ENCODE measurements at regions of chr11 and their contacts with region 1.

Region 1: DNA sequence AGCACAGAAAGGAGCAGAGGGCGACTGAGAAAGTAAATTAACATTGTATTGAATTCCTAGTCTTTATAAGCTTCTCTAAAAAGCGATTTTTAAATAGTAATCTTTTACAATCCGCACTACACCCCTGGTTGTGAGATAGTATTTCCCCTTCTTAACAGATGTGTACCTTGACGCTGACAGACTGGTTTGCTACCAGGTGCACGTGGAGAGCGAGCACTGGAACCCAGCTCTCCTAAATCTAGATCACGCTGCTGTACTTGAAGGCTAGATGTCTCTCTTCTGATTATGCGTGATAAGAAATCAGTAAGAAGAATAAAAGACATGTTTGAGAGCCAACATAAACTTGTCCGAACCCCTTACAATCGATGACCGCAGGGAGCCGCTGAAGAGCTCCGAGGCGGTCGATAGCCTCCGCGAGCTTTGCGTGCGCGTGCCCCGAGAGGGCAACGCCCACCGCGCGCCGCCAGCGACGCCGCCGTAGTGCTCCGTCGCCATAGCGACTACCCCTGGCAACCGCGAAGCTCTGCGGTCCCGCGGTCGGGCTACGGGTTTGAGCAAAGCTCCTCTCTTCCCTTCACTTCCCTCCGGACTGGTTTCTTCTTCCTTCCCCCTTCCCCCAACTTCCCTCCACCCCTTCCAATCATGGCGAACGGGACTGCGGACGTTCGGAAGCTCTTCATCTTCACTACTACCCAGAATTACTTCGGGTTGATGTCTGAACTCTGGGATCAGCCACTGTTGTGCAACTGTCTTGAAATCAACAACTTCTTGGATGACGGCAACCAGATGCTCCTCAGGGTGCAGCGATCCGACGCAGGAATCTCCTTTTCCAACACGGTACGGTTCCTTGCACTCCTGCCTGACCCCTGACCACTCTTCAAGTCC is at the start of gene DYNC2H1:
- DNase-seq: peak; percentile 87 to 95 (median 89)
- ATAC-seq: peak; percentile 96 to 100 (median 100)
- H3K4me3 ChIP-seq: peak within 1 kb of the TSS; percentile 38 to 80 (median 69)
- H3K27ac ChIP-seq: peak within 1 kb of the TSS in 11 of 12 donors; percentile 22 to 76 (median 41)
- H3K4me1 ChIP-seq: peaks cover 0 to 15% (median 4%) of the 10 kb centered on the region in 12 donors
- H3K27me3 ChIP-seq: peaks cover 0 to 4% (median 0%) of the 10 kb centered on the region in 9 donors
- CTCF ChIP-seq: peak; percentile 17 to 79 (median 52)
- POLR2A ChIP-seq: no peak
- total RNA-seq, gene DYNC2H1: 2.3 to 7.2 (median 3.8) TPM

Region 2: GRCh38 chr11:102760355-102761035 is 348.7 kb before region 1 on chr11:
- intact Hi-C with region 1: no loop called
- DNase-seq: no peak
- ATAC-seq: peak; percentile 37 to 84 (median 67)
- H3K4me3 ChIP-seq: no peak overlapping the region
- H3K27ac ChIP-seq: no peak overlapping the region
- H3K4me1 ChIP-seq: peaks cover 0 to 29% (median 0%) of the 10 kb centered on the region in 12 donors
- H3K27me3 ChIP-seq: peaks cover 0 to 32% (median 0%) of the 10 kb centered on the region in 9 donors
- CTCF ChIP-seq: no peak
- POLR2A ChIP-seq: no peak

Region 3: GRCh38 chr11:102780491-102780918 is 328.7 kb before region 1 on chr11 and contains the start of gene MMP10:
- intact Hi-C with region 1: no loop called
- DNase-seq: no peak
- ATAC-seq: no peak
- H3K4me3 ChIP-seq: no peak within 1 kb of the TSS
- H3K27ac ChIP-seq: no peak within 1 kb of the TSS
- H3K4me1 ChIP-seq: no peaks in the 10 kb centered on the region
- H3K27me3 ChIP-seq: peaks cover 0 to 13% (median 0%) of the 10 kb centered on the region in 9 donors
- CTCF ChIP-seq: peak in 5 of 12 donors; percentile 7 to 23 (median 20)
- POLR2A ChIP-seq: no peak
- total RNA-seq, gene MMP10: not detected

Region 4: DNA sequence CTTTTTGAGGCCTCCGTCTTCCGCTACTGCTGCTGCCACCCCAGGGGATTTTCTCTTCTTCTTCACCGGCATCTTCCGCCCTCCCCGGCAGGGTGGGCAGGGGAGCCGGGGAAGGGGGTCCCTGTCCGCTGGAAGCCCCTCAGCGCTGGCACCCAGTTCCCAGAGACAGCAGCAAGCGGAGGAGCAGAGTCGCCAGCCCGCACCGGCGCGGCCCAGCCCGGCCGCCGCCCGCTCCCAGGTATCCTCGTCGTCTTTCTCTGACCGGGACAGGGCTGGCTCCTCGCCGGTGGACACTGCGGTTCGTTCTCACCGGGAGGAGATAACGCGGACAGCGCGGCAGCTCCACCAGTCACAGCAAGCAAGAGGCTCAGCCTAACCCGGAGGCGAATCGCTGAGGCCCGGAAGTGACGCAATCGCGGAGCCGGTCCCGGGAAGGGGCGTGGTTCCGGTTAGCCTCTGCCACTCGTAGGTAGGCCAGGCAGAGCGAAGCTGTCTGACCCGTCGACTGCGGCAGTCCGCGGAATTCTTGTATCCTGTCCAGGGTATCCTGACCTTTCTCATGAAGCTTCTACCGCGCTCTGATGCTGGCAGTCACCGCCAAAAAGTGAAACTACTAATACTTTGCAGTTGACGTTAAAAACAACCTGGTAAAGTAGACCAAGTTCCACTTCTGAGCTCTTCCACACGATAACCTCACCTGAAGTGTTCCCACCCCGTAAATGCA is 17.2 kb before region 1 on chr11 and contains the start of gene DCUN1D5:
- intact Hi-C with region 1: loop called in 1 of 10 experiments (anchors 2 kb)
- DNase-seq: peak; percentile 97 to 98 (median 97)
- ATAC-seq: peak; percentile 99 to 100 (median 100)
- H3K4me3 ChIP-seq: peak within 1 kb of the TSS; percentile 60 to 99 (median 92)
- H3K27ac ChIP-seq: peak within 1 kb of the TSS; percentile 6 to 91 (median 82)
- H3K4me1 ChIP-seq: peaks cover 0 to 31% (median 25%) of the 10 kb centered on the region in 12 donors
- H3K27me3 ChIP-seq: peaks cover 0 to 19% (median 0%) of the 10 kb centered on the region in 9 donors
- CTCF ChIP-seq: no peak
- POLR2A ChIP-seq: peak in 1 of 2 donors; percentile 74
- total RNA-seq, gene DCUN1D5: 17.6 to 37.9 (median 24.5) TPM

Region 5: GRCh38 chr11:103295704-103296103 is 186.5 kb after region 1 on chr11:
- intact Hi-C with region 1: no loop called
- DNase-seq: no peak
- ATAC-seq: no peak
- H3K4me3 ChIP-seq: no peak overlapping the region
- H3K27ac ChIP-seq: no peak overlapping the region
- H3K4me1 ChIP-seq: no peaks in the 10 kb centered on the region
- H3K27me3 ChIP-seq: no peaks in the 10 kb centered on the region
- CTCF ChIP-seq: no peak
- POLR2A ChIP-seq: no peak

Measured in heart left ventricle (tissue), 16 donors.